Mucosa of descending colon (tissue), 3 donors: ENCODE measurements at regions of chr1 and their contacts with region 1.

Region 1: DNA sequence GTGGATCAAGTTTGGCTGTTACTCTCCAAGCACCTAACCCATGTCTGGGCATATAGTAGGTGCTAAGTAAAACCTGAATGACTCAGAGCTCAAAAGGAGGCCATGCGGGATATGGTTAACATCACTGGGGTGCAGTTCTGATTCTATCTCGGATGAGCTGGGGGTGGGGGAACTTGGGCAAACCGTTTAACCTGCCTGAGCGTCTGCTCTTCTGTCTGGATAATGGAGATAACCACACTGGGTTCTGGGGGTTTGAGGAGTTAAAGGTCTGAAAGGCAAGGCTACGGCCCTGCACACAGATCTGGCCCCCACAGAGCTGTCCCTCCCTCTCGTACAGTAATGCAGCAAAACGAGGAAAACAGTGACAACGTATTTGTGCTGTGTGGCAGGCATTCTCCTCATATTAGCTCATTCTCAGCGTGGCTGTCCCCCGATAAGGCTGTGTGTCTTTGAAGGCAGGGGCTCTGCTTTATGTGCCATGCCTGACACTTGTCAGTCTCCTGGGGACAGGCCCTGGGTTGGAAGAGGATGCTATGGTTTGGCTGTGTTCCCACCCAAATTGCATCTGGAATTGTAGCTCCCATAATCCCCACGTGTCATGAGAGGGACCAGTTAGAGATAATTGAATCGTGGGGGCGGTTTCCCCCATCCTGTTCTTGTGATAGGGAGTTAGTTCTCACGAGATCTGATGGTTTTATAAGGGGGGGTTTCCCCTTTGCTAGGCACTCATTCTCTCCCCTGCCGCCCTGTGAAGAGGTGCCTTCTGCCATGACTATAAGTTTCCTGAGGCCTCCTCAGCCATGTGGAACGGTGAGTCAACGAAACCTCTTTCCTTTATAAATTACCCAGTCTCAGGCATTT is 6.8 kb upstream of the ALDH4A1 start:
- DNase-seq: no peak
- ATAC-seq: no peak
- H3K4me3 ChIP-seq: no peak overlapping the region
- H3K4me1 ChIP-seq: peaks cover 4% of the 10 kb centered on the region
- CTCF ChIP-seq: no peak

Region 2: GRCh38 chr1:17837233-17838030 is 1071.7 kb before region 1 on chr1:
- intact Hi-C with region 1: no loop called
- DNase-seq: no peak
- ATAC-seq: no peak
- H3K4me3 ChIP-seq: no peak overlapping the region
- H3K4me1 ChIP-seq: no peaks in the 10 kb centered on the region
- CTCF ChIP-seq: no peak

Region 3: DNA sequence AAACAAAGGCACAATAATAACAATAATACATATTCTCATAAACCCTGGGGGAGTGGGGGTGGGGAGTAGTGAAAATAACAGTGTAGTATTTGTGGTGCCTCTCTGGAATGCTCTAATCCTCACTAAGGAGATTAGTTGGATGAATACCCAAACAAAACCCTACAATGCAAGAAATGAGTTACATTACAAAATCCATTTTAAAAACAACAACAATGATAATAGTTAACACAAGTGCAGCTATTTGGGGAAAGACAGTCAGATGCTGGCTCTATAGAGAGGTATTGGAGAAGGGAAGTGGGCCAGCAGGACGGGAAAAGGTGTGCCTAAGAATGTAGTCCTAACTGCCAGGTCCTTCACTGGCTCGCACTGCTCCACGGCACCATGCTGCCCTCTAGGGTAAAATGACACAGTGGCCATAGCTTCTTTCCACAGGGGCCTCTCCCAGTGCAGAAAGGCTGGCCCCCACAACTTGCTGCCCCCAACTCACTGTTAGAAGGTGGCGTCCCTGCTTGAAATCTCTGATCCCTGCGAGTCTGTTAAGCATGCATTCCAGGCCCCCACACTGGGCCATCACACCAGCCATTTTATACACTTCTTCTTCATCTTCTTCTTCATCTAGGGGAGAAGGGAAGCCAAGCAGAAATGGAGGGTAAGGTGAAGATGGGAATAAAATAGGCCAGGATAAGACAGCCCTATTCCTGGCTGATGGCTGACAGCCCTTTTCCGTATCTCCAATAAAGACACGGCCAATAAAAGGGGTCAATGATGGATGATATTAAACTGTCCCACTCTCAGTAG is 187.1 kb after region 1 on chr1:
- intact Hi-C with region 1: loop called (anchors 1 to 10 kb)
- DNase-seq: peak in 2 of 3 donors; percentile 72 to 73
- ATAC-seq: peak; percentile 79
- H3K4me3 ChIP-seq: no peak overlapping the region
- H3K4me1 ChIP-seq: peaks cover 14% of the 10 kb centered on the region
- CTCF ChIP-seq: no peak